ENCODE measurements at regions of chr13 and their contacts with region 1.

Region 1: DNA sequence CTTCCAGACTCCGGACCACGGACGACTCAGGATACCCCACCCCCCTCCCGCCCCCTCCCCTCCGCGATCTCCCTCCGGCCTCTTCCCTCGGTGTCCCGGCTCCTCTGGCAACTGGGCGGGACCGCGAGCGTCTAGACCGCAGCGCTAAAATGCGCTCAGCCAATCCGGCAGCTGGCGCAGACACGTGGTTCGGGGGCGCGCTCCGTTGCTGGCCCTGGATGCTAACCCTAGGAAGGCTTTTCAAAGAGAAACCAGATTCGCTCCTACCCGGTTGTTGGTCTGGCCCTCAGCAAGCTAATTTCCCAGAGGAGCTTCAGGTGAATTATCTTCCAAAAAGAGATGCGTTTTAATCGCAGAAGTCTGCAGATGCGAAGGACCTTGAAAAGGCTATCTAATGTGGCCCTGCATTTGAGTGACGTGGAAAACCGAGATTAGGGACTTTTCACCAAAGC is at the start of gene DZIP1:
- DNase-seq: peak; percentile 83
- ATAC-seq: peak; percentile 88
- H3K4me3 ChIP-seq: peak within 1 kb of the TSS; percentile 50
- H3K27ac ChIP-seq: peak within 1 kb of the TSS; percentile 80
- H3K4me1 ChIP-seq: peaks cover 10% of the 10 kb centered on the region
- H3K27me3 ChIP-seq: no peaks in the 10 kb centered on the region
- CTCF ChIP-seq: no peak
- POLR2A ChIP-seq: peak; percentile 81
- RAD21 ChIP-seq: no peak
- total RNA-seq, gene DZIP1: 12.2 and 16.9 TPM in 2 replicates

Region 2: DNA sequence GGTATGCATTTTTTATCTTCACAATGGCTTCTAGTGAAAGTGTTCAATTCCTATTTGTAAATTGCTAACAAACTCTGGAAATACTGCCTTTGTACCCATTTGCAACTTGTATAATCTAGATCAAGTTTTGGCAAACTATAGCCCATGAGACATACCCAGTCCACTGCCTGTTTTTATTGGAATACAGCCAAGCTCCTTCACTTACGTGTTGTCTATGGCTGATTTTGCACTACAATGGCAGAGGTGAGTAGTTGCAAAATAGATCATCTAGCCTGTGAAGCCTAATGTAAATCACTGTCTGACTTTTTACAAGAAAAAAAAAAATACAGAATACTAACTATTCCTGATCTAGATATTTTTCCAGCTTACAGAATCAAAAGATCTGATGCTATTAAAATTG is 37.3 kb before region 1 on chr13:
- CTCF ChIA-PET with region 1: no interaction called
- POLR2A ChIA-PET with region 1: no interaction called
- dilution Hi-C with region 1: no loop called
- in situ Hi-C with region 1: no loop called
- intact Hi-C with region 1: no loop called
- DNase-seq: peak; percentile 64
- ATAC-seq: no peak
- H3K4me3 ChIP-seq: no peak overlapping the region
- H3K27ac ChIP-seq: no peak overlapping the region
- H3K4me1 ChIP-seq: peaks cover 4% of the 10 kb centered on the region; the same call in 1 of the 2 replicates
- H3K27me3 ChIP-seq: no peaks in the 10 kb centered on the region
- CTCF ChIP-seq: no peak
- POLR2A ChIP-seq: no peak
- RAD21 ChIP-seq: no peak

Region 3: GRCh38 chr13:95624020-95624419 is 20.6 kb before region 1 on chr13:
- CTCF ChIA-PET with region 1: interaction called, 14 read pairs
- POLR2A ChIA-PET with region 1: no interaction called
- dilution Hi-C with region 1: no loop called
- in situ Hi-C with region 1: no loop called
- intact Hi-C with region 1: no loop called
- DNase-seq: peak; percentile 64
- ATAC-seq: peak; percentile 48; the same call in 1 of the 2 replicates
- H3K4me3 ChIP-seq: no peak overlapping the region
- H3K27ac ChIP-seq: no peak overlapping the region
- H3K4me1 ChIP-seq: peaks cover under 1% of the 10 kb centered on the region; the same call in 1 of the 2 replicates
- H3K27me3 ChIP-seq: no peaks in the 10 kb centered on the region
- CTCF ChIP-seq: peak; percentile 70
- POLR2A ChIP-seq: no peak
- RAD21 ChIP-seq: peak; percentile 83

Measured in IMR-90 (cell line).